ENCODE measurements at regions of chr5 and their contacts with region 1.

Region 1: GRCh38 chr5:148909040-148909439 is 82.6 kb downstream of the ADRB2 start:
- DNase-seq: no peak
- ATAC-seq: no peak
- H3K4me3 ChIP-seq: no peak overlapping the region
- H3K4me3 Mint-ChIP-seq: no peak overlapping the region
- H3K27ac ChIP-seq: no peak overlapping the region
- H3K27ac Mint-ChIP-seq: no peak overlapping the region
- H3K4me1 ChIP-seq: no peaks in the 10 kb centered on the region
- H3K4me1 Mint-ChIP-seq: peaks cover 12% of the 10 kb centered on the region
- H3K27me3 ChIP-seq: no peaks in the 10 kb centered on the region
- H3K27me3 Mint-ChIP-seq: no peaks in the 10 kb centered on the region
- CTCF ChIP-seq: no peak

Region 2: GRCh38 chr5:148719605-148720004 is 189.4 kb before region 1 on chr5:
- CTCF ChIA-PET with region 1: no interaction called
- POLR2A ChIA-PET with region 1: no interaction called
- intact Hi-C with region 1: no loop called
- DNase-seq: no peak
- ATAC-seq: no peak
- H3K4me3 ChIP-seq: no peak overlapping the region
- H3K4me3 Mint-ChIP-seq: no peak overlapping the region
- H3K27ac ChIP-seq: no peak overlapping the region
- H3K27ac Mint-ChIP-seq: no peak overlapping the region
- H3K4me1 ChIP-seq: no peaks in the 10 kb centered on the region
- H3K4me1 Mint-ChIP-seq: no peaks in the 10 kb centered on the region
- H3K27me3 ChIP-seq: no peaks in the 10 kb centered on the region
- H3K27me3 Mint-ChIP-seq: peaks cover 28% of the 10 kb centered on the region
- CTCF ChIP-seq: no peak

Region 3: GRCh38 chr5:148875205-148875875 is 33.7 kb before region 1 on chr5:
- CTCF ChIA-PET with region 1: no interaction called
- POLR2A ChIA-PET with region 1: no interaction called
- intact Hi-C with region 1: no loop called
- DNase-seq: no peak
- ATAC-seq: no peak
- H3K4me3 ChIP-seq: no peak overlapping the region
- H3K4me3 Mint-ChIP-seq: no peak overlapping the region
- H3K27ac ChIP-seq: no peak overlapping the region
- H3K27ac Mint-ChIP-seq: no peak overlapping the region
- H3K4me1 ChIP-seq: no peaks in the 10 kb centered on the region
- H3K4me1 Mint-ChIP-seq: no peaks in the 10 kb centered on the region
- H3K27me3 ChIP-seq: no peaks in the 10 kb centered on the region
- H3K27me3 Mint-ChIP-seq: peaks cover 3% of the 10 kb centered on the region
- CTCF ChIP-seq: no peak

Region 4: DNA sequence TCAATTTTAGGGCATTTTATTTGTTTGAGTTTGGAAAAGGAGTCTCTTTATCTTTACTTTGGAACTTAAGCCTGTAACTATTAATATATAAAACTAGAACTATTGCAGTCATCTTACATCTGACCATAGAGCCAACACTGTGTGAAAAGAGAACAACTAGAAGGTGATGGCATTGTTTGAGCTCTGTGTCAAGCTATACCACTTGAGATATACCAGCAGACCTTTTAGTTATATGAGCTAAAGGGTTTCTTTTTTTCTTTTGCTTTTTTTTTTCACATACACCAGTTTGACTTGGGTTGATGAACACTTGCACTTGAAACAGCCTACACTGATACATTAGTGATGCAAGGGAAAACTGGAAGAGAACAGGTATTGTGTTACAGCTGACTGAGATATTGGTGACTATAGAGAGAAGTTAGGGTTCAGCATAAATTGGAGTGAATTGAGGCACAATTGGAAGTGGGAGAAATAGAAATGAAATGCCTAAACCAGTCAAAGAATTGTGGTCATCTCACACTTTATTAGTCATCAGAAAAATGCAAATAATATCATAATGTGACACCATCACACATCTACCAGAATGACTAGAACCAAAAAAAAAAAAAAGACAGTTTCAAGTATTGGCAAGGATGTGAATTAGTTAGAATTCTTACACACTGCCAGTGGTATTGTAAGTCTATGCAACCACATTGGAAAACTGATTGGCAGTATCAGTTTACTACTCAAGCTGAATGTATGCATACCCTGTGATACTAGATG is 21.7 kb before region 1 on chr5:
- CTCF ChIA-PET with region 1: no interaction called
- POLR2A ChIA-PET with region 1: no interaction called
- intact Hi-C with region 1: loop called in 1 of 2 experiments (anchors 1 kb)
- DNase-seq: peak in 1 of 9 experiments; percentile 21
- ATAC-seq: no peak
- H3K4me3 ChIP-seq: no peak overlapping the region
- H3K4me3 Mint-ChIP-seq: no peak overlapping the region
- H3K27ac ChIP-seq: no peak overlapping the region
- H3K27ac Mint-ChIP-seq: no peak overlapping the region
- H3K4me1 ChIP-seq: no peaks in the 10 kb centered on the region
- H3K4me1 Mint-ChIP-seq: no peaks in the 10 kb centered on the region
- H3K27me3 ChIP-seq: no peaks in the 10 kb centered on the region
- H3K27me3 Mint-ChIP-seq: peaks cover 15% of the 10 kb centered on the region
- CTCF ChIP-seq: no peak